AG04450 (cell line): ENCODE measurements at regions of chr7 and their contacts with region 1.

Region 1: DNA sequence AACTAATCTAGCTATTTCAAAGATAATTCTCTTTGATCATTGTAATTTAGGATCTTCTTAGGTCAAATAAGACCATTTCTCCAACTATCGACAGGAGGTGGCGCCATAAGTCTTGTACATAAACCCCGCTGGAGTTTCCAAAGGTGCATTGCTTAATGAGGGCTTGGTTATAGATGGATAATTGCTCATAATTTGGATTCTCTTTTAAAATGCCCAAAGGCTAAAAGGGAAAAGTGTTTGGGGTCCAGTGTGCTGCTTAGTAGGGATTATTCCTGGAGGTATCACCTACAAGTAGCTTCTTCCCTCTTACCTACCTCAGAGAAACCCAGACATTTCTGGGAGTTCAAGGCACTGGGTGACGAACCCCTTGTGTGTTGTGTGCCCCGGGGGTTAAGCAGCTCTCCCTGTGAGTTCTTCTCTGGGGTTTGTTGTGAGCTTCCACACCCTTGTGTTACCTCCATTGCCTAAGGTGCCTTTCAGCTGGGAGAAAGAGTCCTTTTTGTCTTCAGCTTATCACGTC is 75.2 kb downstream of the PAXIP1 start:
- DNase-seq: peak; percentile 76
- H3K4me3 ChIP-seq: peak overlapping the region; percentile 73
- H3K27ac ChIP-seq: peak overlapping the region; percentile 47
- H3K27me3 ChIP-seq: no peaks in the 10 kb centered on the region
- CTCF ChIP-seq: peak; percentile 71

Region 2: DNA sequence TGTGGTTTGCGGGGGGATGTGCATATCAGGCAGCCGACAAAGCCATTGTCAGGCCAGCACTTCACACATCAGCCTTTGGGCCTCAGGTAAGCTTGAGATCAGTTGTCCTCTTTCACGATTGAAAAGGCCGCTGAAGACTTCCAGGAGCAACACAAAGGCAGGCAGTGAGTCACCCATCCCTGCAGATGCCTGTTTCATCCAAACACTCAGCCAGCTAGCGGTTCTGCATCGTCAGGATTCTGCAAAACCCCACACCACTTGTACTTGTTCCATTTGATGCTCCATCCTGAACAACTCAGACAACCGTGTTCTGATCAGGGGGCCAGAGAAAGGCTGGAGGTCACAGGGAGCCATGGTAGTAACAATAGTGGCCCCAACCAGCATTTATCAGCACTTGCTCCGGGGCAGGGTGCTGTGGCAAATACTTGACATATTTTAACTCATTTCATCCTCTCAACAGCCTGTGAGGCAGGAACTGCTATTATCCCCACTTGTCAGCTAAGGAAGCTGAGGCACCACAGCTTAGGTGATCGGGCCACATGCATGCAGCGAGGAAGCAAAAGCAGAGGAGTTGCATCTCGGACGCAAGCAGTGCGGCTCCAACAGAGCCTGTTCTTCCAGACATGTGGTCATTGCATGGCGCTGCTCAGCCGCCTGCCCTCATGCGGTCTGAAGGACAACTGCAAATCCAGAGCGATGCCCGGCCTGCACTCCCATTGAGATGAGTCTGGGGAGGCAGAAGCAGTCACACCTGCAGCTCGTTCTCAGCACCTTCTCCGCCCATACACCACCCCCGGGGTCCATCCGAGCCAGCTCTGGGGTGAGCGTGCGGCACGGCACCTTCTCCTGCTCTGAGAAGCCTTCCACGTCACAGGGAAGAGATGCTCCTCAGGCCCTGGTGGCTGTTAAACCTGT is 69.7 kb before region 1 on chr7:
- CTCF ChIA-PET with region 1: no interaction called
- POLR2A ChIA-PET with region 1: no interaction called
- DNase-seq: no peak
- H3K4me3 ChIP-seq: no peak overlapping the region
- H3K27ac ChIP-seq: no peak overlapping the region
- H3K27me3 ChIP-seq: no peaks in the 10 kb centered on the region
- CTCF ChIP-seq: no peak

Region 3: DNA sequence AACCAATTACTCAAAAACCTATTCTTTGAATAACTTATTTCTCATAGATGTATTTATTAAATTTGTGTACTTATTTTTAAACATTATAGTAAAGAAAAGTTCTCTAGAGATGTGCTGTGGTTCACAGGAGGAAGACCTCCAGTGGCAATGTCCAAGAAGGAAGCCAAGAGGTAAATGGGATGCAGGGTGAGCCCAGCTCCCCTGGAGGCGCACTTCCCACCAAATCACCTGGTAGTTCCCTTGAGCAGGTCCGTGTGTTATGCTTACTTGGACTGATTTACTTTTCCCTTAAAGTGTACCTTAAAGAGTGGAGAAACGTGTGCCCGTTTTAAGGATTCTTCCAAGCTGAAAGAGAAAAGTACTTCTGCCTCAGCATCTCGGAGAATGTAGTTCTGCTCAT is 19.9 kb after region 1 on chr7:
- CTCF ChIA-PET with region 1: interaction called, 79 read pairs
- POLR2A ChIA-PET with region 1: no interaction called
- DNase-seq: no peak
- H3K4me3 ChIP-seq: no peak overlapping the region
- H3K27ac ChIP-seq: no peak overlapping the region
- H3K27me3 ChIP-seq: no peaks in the 10 kb centered on the region
- CTCF ChIP-seq: no peak

Region 4: GRCh38 chr7:154960063-154960790 is 32.5 kb after region 1 on chr7:
- CTCF ChIA-PET with region 1: interaction called, 12 read pairs
- POLR2A ChIA-PET with region 1: no interaction called
- DNase-seq: no peak
- H3K4me3 ChIP-seq: no peak overlapping the region
- H3K27ac ChIP-seq: no peak overlapping the region
- H3K27me3 ChIP-seq: no peaks in the 10 kb centered on the region
- CTCF ChIP-seq: no peak

Region 5: DNA sequence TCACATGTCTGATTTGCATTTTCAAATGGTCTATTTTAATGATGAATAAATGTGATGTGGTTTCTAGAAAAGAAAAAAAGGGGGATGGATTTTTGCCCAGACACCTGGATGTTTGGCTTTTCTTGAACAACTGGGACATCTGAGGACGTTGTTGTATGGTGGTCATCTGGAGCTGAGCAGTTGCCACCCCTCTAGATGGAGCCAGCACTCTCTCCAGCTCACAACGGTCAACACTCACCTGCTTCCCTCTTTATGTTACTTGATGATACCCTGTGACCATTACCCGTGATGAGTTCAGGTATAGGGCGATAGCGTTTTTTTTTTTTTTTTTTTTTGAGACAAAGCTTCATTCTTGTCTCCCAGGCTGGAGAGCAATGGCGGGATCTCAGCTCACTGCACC is 105.3 kb after region 1 on chr7:
- CTCF ChIA-PET with region 1: no interaction called
- POLR2A ChIA-PET with region 1: no interaction called
- DNase-seq: no peak
- H3K4me3 ChIP-seq: no peak overlapping the region
- H3K27ac ChIP-seq: no peak overlapping the region
- H3K27me3 ChIP-seq: no peaks in the 10 kb centered on the region
- CTCF ChIP-seq: peak; percentile 4; the same call in 1 of the 2 replicates

Region 6: DNA sequence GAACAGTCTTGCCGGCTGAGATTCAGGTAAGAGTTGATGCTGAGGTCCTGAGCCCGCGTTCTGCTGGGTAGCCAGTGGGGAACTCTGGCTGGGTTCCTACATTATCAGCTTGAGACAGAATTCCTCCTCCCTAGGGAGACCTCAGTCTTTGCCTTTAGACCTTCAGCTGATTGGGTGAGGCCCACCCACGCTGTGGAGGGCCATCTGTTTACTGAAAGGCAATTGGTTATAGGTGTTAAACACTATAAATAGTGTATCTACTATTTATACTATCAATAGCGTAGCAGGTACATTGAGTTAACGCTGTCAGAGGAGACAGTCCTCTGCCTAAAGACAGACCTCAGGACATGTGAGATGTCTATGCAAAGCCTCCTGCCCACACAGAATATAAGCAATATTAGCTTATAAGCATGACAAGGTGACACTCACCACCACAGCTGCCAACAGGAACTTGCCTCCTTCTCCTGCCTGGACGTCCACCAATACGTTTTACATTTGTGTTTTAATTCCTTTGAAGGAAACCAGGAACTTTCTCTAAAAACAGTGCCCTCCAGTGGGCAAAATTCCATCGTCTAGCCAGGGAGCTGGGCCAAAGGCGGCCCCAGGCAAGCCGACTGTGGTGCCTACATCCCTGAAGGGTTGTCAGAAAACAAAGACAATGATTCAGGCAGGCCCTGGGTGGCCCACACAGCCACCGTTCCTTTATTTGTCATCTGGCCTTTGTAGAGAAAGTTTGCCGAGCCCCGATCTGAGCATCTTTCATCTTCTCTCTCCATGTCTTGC is 428.8 kb after region 1 on chr7:
- CTCF ChIA-PET with region 1: interaction called, 22 read pairs
- POLR2A ChIA-PET with region 1: no interaction called
- DNase-seq: no peak
- H3K4me3 ChIP-seq: no peak overlapping the region
- H3K27ac ChIP-seq: no peak overlapping the region
- H3K27me3 ChIP-seq: peaks cover 21% of the 10 kb centered on the region
- CTCF ChIP-seq: peak; percentile 35